Activated naive CD4-positive, alpha-beta T cell treated with anti-CD3 and anti-CD28 coated beads for 36 hours (primary cell): ENCODE measurements at regions of chr12 and their contacts with region 1.

Region 1: DNA sequence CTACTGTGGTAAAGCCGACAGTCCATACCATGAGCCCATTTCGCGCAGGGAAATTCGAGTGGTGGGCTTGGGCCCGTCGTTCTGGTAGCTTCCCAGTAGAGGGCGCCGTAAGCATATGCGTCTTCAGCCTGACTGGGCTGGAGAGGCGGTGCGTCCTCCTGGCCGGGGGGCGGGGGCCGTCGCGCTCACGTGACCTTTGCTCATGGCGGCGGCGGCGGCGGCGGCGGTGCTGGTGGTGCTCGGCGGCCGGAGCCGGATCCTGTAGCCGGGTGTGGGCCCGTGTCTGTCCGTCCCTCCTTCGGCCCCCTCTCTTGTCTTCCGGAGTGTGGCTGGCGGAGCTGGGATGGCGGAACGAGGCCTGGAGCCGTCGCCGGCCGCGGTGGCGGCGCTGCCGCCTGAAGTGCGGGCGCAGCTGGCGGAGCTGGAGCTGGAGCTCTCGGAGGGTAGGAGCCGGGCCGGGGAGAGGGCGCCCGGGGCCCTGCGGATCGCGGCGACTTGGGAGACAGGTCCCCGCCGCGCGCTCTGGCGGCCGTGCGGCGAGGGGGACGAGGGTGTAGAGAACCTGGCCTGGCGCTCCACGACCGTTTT is at the start of gene DIP2B:
- DNase-seq: peak; percentile 98
- H3K4me3 Mint-ChIP-seq: peak within 1 kb of the TSS; percentile 91
- H3K27ac Mint-ChIP-seq: peak within 1 kb of the TSS; percentile 90
- H3K4me1 Mint-ChIP-seq: peaks cover 42% of the 10 kb centered on the region
- H3K27me3 Mint-ChIP-seq: no peaks in the 10 kb centered on the region
- total RNA-seq, gene DIP2B: 27.8 to 28.2 TPM

Region 2: GRCh38 chr12:50517456-50518048 is 12.7 kb after region 1 on chr12:
- CTCF ChIA-PET with region 1: interaction called, 20 read pairs
- intact Hi-C with region 1: loop called (anchors 1 kb)
- DNase-seq: peak; percentile 23
- H3K4me3 Mint-ChIP-seq: no peak overlapping the region
- H3K27ac Mint-ChIP-seq: no peak overlapping the region
- H3K4me1 Mint-ChIP-seq: peaks cover 69% of the 10 kb centered on the region
- H3K27me3 Mint-ChIP-seq: no peaks in the 10 kb centered on the region

Region 3: GRCh38 chr12:50542448-50542847 is 37.6 kb after region 1 on chr12:
- CTCF ChIA-PET with region 1: interaction called, 9 read pairs
- intact Hi-C with region 1: loop called (anchors 1 kb)
- DNase-seq: peak; percentile 64
- H3K4me3 Mint-ChIP-seq: no peak overlapping the region
- H3K27ac Mint-ChIP-seq: peak overlapping the region; percentile 85
- H3K4me1 Mint-ChIP-seq: peaks cover 55% of the 10 kb centered on the region
- H3K27me3 Mint-ChIP-seq: no peaks in the 10 kb centered on the region

Region 4: DNA sequence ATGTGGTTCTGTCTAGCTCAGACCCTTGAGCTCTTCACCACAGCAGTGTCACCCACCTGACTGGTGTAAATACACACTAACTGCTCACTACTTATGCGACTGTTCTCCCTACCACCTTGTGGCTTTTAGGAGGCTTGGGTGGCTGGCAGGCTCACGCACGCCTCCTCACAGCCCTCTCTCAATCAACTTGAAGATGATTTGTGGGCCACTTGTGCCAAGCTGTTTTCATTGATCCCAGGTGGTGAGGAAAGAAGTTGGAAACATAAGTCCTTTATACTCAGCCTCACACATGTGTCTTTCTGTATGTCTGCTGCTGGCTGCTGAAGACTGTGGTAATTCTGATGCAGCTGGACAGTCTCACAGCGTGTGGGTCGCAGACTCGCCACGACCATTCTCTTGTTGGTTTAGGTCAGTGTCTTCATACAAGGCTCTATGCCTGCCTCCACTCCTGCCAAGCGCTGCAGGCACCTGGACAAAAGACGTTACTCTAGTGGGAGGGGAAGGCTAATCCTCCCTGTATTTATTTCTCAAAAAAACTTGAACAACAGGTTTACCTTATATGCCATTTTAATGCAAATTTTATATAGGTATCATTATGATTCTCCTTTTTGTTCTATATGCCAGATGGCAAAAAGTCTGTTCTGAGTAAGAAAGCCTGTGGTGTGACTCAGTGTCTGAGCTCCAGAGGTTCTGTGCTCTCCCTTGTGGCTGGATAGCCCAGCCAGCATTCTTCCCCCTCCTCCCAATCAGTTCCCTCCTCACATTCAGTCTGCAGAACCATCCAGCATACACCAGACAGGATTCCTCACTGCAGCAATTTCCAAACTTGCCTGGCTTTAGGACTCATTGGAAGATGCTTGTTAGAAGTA is 115.5 kb after region 1 on chr12:
- CTCF ChIA-PET with region 1: interaction called, 18 read pairs
- intact Hi-C with region 1: loop called (anchors 5 kb)
- DNase-seq: peak; percentile 63
- H3K4me3 Mint-ChIP-seq: no peak overlapping the region
- H3K27ac Mint-ChIP-seq: peak overlapping the region; percentile 70
- H3K4me1 Mint-ChIP-seq: peaks cover 74% of the 10 kb centered on the region
- H3K27me3 Mint-ChIP-seq: no peaks in the 10 kb centered on the region

Region 5: DNA sequence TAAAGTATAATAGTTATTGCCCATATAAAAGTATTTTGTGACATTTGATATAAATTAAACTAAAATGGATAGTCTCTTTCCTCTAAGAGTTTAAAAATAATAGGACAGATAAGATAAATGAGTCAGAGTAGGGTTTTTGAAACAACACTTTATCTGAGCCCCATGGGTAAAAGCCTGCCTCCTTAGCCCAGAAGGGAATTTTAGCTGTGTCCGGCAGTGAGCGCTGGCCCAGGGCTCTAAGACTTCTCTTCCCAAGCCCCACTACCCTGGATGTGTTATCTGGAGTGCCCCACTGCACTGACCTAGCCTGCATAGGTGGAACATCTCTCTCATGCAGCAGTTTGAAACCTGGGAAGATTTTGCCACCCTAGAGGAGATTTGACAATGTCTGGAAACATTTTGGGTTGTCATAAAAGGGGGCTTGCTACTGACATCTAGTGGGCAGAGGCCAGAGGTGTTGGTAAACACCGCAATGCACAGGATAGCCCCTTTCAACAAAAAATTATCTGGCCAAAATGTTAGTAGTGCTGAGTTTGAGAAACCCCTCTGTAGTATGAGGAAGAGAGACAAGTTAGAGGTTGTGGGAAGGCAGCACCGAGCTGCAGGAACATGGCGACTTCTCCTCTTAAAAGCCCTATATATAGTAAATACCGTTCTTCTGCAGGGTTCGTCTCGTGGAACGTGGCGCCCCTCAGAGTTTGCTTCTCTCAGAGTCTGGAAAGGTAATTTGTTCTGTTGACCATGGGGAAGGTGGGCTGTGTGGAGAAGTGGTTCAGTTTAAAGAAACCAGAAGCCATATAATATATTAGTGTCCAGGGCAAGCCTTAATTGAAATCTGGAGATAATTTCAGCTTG is 229.7 kb after region 1 on chr12:
- CTCF ChIA-PET with region 1: interaction called, 4 read pairs
- intact Hi-C with region 1: loop called (anchors 2 kb)
- DNase-seq: peak; percentile 30
- H3K4me3 Mint-ChIP-seq: no peak overlapping the region
- H3K27ac Mint-ChIP-seq: no peak overlapping the region
- H3K4me1 Mint-ChIP-seq: no peaks in the 10 kb centered on the region
- H3K27me3 Mint-ChIP-seq: no peaks in the 10 kb centered on the region

Region 6: DNA sequence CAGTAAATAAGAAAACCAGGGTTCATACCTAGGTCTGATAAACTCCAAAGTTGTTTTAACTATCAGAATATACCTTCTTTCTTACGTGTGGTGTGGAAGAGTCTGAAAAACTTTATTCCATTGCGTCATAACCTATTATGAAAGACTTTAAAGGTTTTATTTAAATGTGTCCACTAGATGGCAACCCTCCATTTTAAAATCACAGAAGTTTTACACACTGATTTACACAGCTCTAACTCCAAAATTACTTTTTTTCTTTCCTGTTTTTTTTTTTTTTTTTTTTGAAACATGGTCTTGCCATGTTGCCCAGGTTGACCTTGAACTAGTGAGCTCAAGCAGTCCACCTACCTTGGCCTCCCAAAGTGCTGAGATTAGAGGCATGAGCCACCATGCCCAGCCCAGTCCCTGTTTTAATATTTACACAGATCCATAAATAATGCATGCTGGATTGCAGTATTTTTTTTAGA is 320.5 kb after region 1 on chr12:
- CTCF ChIA-PET with region 1: no interaction called
- intact Hi-C with region 1: loop called (anchors 2 kb)
- DNase-seq: no peak
- H3K4me3 Mint-ChIP-seq: no peak overlapping the region
- H3K27ac Mint-ChIP-seq: peak overlapping the region; percentile 52
- H3K4me1 Mint-ChIP-seq: peaks cover 10% of the 10 kb centered on the region
- H3K27me3 Mint-ChIP-seq: no peaks in the 10 kb centered on the region